ENCODE measurements at regions of chr11 and their contacts with region 1.

Region 1: GRCh38 chr11:85854557-85855340 is 434 bp upstream of the CCDC83 start:
- DNase-seq: peak; percentile 87
- H3K4me3 ChIP-seq: peak overlapping the region; percentile 65
- H3K27ac ChIP-seq: no peak overlapping the region
- H3K4me1 ChIP-seq: peaks cover 10% of the 10 kb centered on the region
- CTCF ChIP-seq: peak; percentile 74

Region 2: GRCh38 chr11:85595285-85595884 is 259.4 kb before region 1 on chr11:
- CTCF ChIA-PET with region 1: no interaction called
- POLR2A ChIA-PET with region 1: no interaction called
- intact Hi-C with region 1: loop called (anchors 1 kb)
- DNase-seq: peak; percentile 66
- H3K4me3 ChIP-seq: no peak overlapping the region
- H3K27ac ChIP-seq: no peak overlapping the region
- H3K4me1 ChIP-seq: no peaks in the 10 kb centered on the region
- CTCF ChIP-seq: peak; percentile 90

Region 3: GRCh38 chr11:86193297-86194095 is 338.7 kb after region 1 on chr11:
- CTCF ChIA-PET with region 1: interaction called, 4 read pairs
- POLR2A ChIA-PET with region 1: no interaction called
- intact Hi-C with region 1: loop called (anchors 2 kb)
- DNase-seq: peak; percentile 87
- H3K4me3 ChIP-seq: peak overlapping the region; percentile 62
- H3K27ac ChIP-seq: peak overlapping the region; percentile 76
- H3K4me1 ChIP-seq: peaks cover 23% of the 10 kb centered on the region
- CTCF ChIP-seq: peak; percentile 97

Region 4: DNA sequence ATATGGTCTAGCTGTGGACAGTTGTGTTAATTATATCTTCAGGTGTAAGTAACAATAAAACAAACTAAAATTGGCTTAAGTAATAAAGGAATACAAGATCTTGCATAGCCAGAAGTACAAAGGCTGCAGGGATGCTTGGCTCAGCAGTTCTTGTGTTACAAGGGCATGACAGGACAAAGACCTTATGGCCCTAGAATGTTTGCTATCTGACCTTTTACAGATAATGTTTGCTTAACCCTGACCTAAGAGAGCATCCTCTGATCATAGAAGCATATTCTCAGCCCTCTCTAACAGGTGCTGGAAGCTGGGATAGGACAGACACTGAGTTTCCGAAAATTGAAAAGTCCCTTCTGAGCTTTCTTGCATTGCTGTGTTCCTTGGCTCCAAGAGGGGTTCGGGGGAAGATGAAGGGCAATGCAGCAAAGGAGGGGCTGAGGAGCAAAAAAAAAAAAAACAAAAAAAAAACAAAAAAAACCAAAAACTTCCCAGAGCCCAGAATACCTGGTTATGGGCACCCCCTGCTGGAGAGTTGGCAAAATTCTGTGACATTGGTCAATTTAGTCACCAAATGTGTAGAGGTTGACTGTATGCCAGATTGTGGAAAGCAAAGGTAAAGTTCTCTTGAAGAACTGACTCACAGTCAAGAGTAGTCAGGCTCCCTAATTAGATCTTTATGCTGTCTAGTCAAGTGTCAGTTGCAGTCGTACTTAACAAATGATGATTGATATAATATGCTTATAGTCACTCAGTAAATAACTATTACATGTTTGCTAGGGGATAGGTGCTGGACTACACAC is 436.9 kb after region 1 on chr11:
- CTCF ChIA-PET with region 1: no interaction called
- POLR2A ChIA-PET with region 1: no interaction called
- intact Hi-C with region 1: loop called (anchors 1 kb)
- DNase-seq: peak; percentile 67
- H3K4me3 ChIP-seq: no peak overlapping the region
- H3K27ac ChIP-seq: no peak overlapping the region
- H3K4me1 ChIP-seq: no peaks in the 10 kb centered on the region
- CTCF ChIP-seq: peak; percentile 93

Region 5: GRCh38 chr11:86818466-86819192 is 963.9 kb after region 1 on chr11:
- CTCF ChIA-PET with region 1: no interaction called
- POLR2A ChIA-PET with region 1: no interaction called
- intact Hi-C with region 1: loop called (anchors 2 kb)
- DNase-seq: peak; percentile 58
- H3K4me3 ChIP-seq: no peak overlapping the region
- H3K27ac ChIP-seq: no peak overlapping the region
- H3K4me1 ChIP-seq: no peaks in the 10 kb centered on the region
- CTCF ChIP-seq: peak; percentile 89